Activated CD8-positive, alpha-beta memory T cell treated with anti-CD3 and anti-CD28 coated beads, Interleukin-2, amount 10 ng/mL, durations not matched to agents 7 days and 5 days (primary cell): ENCODE measurements at regions of chr5 and their contacts with region 1.

Region 1: GRCh38 chr5:107979291-107979690 is 308.6 kb upstream of the EFNA5 start:
- DNase-seq: no peak
- ATAC-seq: no peak
- H3K4me3 Mint-ChIP-seq: no peak overlapping the region
- H3K27ac Mint-ChIP-seq: peak overlapping the region; percentile 27
- H3K4me1 Mint-ChIP-seq: peaks cover 38% of the 10 kb centered on the region
- H3K27me3 Mint-ChIP-seq: no peaks in the 10 kb centered on the region

Region 2: GRCh38 chr5:107990881-107991810 is 11.9 kb after region 1 on chr5:
- CTCF ChIA-PET with region 1: interaction called, 20 read pairs
- DNase-seq: no peak
- ATAC-seq: peak; percentile 88
- H3K4me3 Mint-ChIP-seq: peak overlapping the region; percentile 30
- H3K27ac Mint-ChIP-seq: peak overlapping the region; percentile 88
- H3K4me1 Mint-ChIP-seq: peaks cover 16% of the 10 kb centered on the region
- H3K27me3 Mint-ChIP-seq: no peaks in the 10 kb centered on the region